Naive thymus-derived CD8-positive, alpha-beta T cell (primary cell): ENCODE measurements at regions of chr14 and their contacts with region 1.

Region 1: GRCh38 chr14:68795597-68796417 is 2.9 kb upstream of the ZFP36L1 start:
- DNase-seq: peak; percentile 73 to 91 (median 82)
- ATAC-seq: peak; percentile 39 to 56
- H3K4me3 Mint-ChIP-seq: peak overlapping the region; percentile 86 to 100 (median 92)
- H3K27ac Mint-ChIP-seq: peak overlapping the region; percentile 94 to 100 (median 99)
- H3K4me1 Mint-ChIP-seq: peaks cover 8 to 45% (median 34%) of the 10 kb centered on the region in 4 donors
- H3K27me3 Mint-ChIP-seq: peaks cover 0 to 2% (median 0%) of the 10 kb centered on the region in 5 donors

Region 2: DNA sequence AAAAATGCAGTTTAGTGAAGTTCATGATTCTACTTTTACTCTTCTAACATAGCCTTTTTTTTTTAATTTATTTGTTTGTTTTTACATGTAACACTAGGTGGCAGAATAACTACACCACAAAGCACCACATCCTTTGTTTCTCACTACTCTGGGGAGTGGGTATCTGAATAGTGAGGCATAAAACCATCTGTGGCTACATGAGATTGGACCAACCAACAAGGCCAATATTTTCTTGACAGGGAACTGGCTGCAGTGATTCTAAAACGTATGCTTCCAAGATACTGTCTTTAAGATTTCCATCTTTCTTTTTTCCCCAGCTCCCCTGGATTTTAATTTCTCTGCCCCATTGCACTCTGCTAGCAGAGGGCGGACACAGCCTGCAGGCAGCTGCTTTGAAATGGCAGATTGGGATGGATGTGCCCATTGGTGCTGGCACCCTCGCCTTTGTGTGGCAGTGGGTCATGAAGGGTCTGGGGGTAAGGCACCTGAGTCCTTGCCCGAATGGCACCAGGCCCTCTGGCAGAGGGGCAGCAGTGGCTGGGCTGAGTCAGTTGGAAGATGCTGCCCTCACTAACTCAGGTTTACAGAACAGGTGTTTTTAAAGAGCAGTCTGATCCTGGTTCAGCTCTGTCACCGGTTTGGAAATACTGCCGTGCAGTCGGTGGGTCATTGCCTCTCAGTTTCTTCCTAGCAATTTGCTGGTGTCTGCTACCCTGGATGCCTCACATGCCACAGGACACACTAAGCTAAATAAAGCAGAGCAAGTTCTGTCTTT is 547.1 kb before region 1 on chr14:
- POLR2A ChIA-PET with region 1: interaction called, 150 read pairs
- DNase-seq: peak in 6 of 10 donors; percentile 23 to 66 (median 46)
- ATAC-seq: peak; percentile 79 to 82
- H3K4me3 Mint-ChIP-seq: peak overlapping the region in 1 of 10 donors; percentile 49
- H3K27ac Mint-ChIP-seq: peak overlapping the region in 7 of 10 donors; percentile 9 to 68 (median 37)
- H3K4me1 Mint-ChIP-seq: peaks cover 12 to 54% (median 34%) of the 10 kb centered on the region in 4 donors
- H3K27me3 Mint-ChIP-seq: no peaks in the 10 kb centered on the region

Region 3: GRCh38 chr14:68283378-68284123 is 512.3 kb before region 1 on chr14:
- POLR2A ChIA-PET with region 1: interaction called, 150 read pairs
- DNase-seq: peak; percentile 22 to 78 (median 60)
- ATAC-seq: peak; percentile 66 to 73
- H3K4me3 Mint-ChIP-seq: peak overlapping the region; percentile 49 to 82 (median 68)
- H3K27ac Mint-ChIP-seq: peak overlapping the region; percentile 94 to 99 (median 98)
- H3K4me1 Mint-ChIP-seq: peaks cover 40 to 97% (median 86%) of the 10 kb centered on the region in 4 donors
- H3K27me3 Mint-ChIP-seq: no peaks in the 10 kb centered on the region

Region 4: GRCh38 chr14:68482772-68483395 is 312.9 kb before region 1 on chr14:
- POLR2A ChIA-PET with region 1: interaction called, 15 read pairs
- DNase-seq: no peak
- ATAC-seq: no peak
- H3K4me3 Mint-ChIP-seq: peak overlapping the region in 8 of 10 donors; percentile 22 to 75 (median 66)
- H3K27ac Mint-ChIP-seq: peak overlapping the region in 9 of 10 donors; percentile 71 to 98 (median 95)
- H3K4me1 Mint-ChIP-seq: peaks cover 37 to 88% (median 80%) of the 10 kb centered on the region in 4 donors
- H3K27me3 Mint-ChIP-seq: no peaks in the 10 kb centered on the region

Region 5: DNA sequence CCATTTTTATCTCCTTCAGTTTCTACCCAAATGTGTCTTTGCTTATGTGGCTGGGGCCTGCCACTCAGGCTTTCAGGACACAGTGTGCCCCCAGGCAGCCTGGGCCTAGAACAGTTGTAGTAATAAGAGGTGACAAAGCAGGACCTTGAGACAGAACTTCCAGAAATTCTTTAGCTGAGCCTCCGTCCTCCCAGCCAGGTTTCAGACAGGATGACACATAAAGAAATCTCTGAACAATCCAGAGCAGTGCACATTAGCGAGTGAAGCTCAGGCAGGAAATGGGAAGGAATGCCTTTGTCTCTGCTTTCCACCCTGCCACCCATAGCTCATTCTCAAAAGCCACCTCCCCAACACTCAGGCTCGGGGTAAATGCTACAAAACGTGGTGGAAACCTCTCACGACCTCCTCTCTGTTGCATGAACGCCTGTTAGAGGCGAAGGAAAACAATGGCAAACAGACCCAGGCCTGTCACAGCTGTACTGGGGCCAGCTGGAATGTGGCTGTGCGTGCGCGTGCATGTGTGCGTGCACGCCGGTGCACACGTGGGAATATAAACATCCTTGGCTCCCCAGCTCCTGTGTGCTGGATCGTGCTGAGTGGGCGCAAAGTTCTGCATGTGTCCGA is 289.7 kb before region 1 on chr14:
- POLR2A ChIA-PET with region 1: interaction called, 182 read pairs
- DNase-seq: no peak
- ATAC-seq: no peak
- H3K4me3 Mint-ChIP-seq: peak overlapping the region; percentile 58 to 85 (median 78)
- H3K27ac Mint-ChIP-seq: peak overlapping the region; percentile 76 to 96 (median 93)
- H3K4me1 Mint-ChIP-seq: peaks cover 43 to 85% (median 79%) of the 10 kb centered on the region in 4 donors
- H3K27me3 Mint-ChIP-seq: no peaks in the 10 kb centered on the region

Region 6: GRCh38 chr14:68775143-68776126 is 20.4 kb before region 1 on chr14:
- POLR2A ChIA-PET with region 1: interaction called, 220 read pairs
- DNase-seq: peak in 1 of 10 donors; percentile 18
- ATAC-seq: no peak
- H3K4me3 Mint-ChIP-seq: peak overlapping the region in 1 of 10 donors; percentile 26
- H3K27ac Mint-ChIP-seq: peak overlapping the region in 4 of 10 donors; percentile 23 to 74 (median 60)
- H3K4me1 Mint-ChIP-seq: peaks cover 45 to 81% (median 72%) of the 10 kb centered on the region in 4 donors
- H3K27me3 Mint-ChIP-seq: no peaks in the 10 kb centered on the region

Region 7: DNA sequence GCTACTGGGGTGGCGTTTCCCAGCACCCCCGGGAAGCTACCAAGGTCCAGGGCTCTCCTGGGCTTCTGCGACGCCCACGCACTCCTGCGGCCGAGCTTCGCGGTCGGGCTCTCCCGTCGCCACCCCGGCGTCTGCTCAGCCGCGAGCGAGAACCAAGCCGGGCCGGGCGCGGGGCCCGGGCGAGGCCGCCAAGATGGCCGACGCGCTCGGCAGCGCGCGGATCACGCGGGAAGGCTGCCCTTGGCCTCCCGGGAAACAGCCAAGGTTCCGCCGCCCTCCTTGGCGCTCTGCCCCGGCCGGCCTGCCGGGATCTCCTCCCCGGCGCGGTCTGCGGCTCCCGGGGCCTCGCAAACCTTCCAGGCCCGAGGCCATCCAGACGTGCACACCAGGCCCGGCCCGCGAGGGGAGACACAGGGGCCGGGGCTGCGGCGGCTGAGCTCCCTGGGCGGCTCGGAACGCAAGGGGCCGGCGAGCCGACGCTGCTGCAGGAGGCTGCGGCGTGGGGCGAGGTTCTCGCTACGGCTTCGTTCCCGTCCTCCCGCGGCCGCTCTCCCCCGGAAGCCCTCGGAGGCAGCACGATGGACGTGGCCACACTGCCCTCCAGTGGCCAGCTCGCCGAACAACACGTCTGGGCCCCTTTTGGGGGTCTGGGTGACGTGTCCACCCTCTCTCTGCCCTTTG is 20.6 kb after region 1 on chr14:
- POLR2A ChIA-PET with region 1: interaction called, 1,375 read pairs
- DNase-seq: peak; percentile 80 to 94 (median 90)
- ATAC-seq: peak; percentile 79 to 81
- H3K4me3 Mint-ChIP-seq: peak overlapping the region; percentile 77 to 96 (median 87)
- H3K27ac Mint-ChIP-seq: peak overlapping the region; percentile 92 to 100 (median 97)
- H3K4me1 Mint-ChIP-seq: peaks cover 34 to 84% (median 69%) of the 10 kb centered on the region in 4 donors
- H3K27me3 Mint-ChIP-seq: no peaks in the 10 kb centered on the region

Region 8: DNA sequence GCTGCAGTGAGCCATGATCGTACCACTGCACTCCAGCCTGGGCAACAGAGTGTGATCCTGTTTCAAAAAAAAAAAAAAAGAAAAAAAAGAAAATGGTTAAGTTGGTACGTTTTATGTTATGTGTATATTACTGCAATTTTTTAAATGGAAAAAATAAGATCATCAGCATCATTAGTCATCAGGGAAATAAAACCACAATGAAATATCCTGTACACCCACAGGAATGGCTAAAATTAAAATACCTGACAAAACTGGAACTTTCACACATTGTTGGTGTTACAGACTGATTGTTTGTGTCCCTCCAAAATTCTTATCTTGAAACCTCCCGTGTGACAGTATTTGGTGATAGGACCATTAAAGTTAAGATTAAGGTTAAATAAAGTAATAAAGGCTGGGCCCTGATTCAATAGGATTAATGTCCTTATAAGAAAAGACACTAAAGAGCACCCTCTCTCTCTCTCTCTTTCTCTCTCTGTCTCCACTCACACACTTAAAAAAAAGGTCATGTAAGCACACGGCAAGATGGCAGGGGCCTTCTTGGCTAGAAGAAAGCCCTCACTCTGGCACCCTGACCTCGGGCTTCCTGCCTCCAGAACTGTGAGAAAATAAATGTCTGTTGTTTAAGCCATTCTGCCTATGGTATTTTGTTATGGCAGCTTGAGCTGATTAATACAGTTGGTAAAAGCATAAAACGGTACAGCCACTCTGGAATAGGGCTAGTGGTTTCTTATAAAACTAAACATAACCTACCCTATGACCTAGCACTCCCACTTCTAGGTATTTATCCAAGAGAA is 45.4 kb after region 1 on chr14:
- POLR2A ChIA-PET with region 1: no interaction called
- DNase-seq: no peak
- ATAC-seq: no peak
- H3K4me3 Mint-ChIP-seq: no peak overlapping the region
- H3K27ac Mint-ChIP-seq: peak overlapping the region in 6 of 10 donors; percentile 1 to 45 (median 31)
- H3K4me1 Mint-ChIP-seq: peaks cover 15 to 28% (median 22%) of the 10 kb centered on the region in 4 donors
- H3K27me3 Mint-ChIP-seq: no peaks in the 10 kb centered on the region